ENCODE measurements at regions of chr9 and their contacts with region 1.

Region 1: DNA sequence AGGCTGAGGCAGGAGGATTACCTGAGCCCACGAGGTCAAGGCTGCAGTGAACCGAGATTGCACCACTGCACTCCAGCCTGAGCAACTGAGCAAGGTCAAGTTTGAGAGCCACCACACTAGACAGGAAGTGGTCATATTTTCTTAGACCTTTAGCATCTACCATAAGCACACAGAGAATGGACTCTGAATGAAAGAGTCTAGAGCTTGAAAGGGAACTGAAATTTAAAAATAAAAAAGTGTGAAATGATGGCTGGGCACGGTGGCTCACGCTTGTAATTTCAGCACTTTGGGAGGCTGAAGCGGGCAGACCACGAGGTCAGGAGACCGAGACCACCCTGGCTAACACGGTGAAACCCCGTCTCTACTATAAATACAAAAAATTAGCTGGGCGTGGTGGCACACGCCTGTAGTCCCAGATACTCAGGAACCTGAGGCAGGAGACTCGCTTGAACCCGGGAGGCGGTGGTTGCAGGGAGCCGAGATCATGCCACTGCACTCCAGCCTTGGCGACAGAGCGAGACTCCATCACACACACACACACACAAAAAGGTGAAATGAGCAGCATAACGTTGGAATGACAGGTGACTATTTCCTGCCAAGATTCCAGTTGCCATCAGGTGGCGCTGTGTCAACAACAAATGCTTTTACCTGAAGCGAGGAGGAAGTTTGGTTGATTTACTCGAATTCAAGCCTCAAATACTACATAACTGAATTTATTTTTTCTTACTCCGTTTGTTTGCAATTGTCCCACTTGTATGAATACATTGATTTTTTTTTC is 21.3 kb upstream of the AK3 start:
- DNase-seq: peak; percentile 90
- ATAC-seq: peak; percentile 81
- H3K4me3 Mint-ChIP-seq: peak overlapping the region; percentile 50
- H3K27ac Mint-ChIP-seq: peak overlapping the region; percentile 62
- H3K4me1 Mint-ChIP-seq: peaks cover 20% of the 10 kb centered on the region
- H3K27me3 Mint-ChIP-seq: peaks cover 15% of the 10 kb centered on the region

Region 2: GRCh38 chr9:4718911-4719310 is 43.4 kb before region 1 on chr9:
- CTCF ChIA-PET with region 1: no interaction called
- POLR2A ChIA-PET with region 1: no interaction called
- DNase-seq: no peak
- ATAC-seq: no peak
- H3K4me3 Mint-ChIP-seq: no peak overlapping the region
- H3K27ac Mint-ChIP-seq: no peak overlapping the region
- H3K4me1 Mint-ChIP-seq: no peaks in the 10 kb centered on the region
- H3K27me3 Mint-ChIP-seq: no peaks in the 10 kb centered on the region

Region 3: DNA sequence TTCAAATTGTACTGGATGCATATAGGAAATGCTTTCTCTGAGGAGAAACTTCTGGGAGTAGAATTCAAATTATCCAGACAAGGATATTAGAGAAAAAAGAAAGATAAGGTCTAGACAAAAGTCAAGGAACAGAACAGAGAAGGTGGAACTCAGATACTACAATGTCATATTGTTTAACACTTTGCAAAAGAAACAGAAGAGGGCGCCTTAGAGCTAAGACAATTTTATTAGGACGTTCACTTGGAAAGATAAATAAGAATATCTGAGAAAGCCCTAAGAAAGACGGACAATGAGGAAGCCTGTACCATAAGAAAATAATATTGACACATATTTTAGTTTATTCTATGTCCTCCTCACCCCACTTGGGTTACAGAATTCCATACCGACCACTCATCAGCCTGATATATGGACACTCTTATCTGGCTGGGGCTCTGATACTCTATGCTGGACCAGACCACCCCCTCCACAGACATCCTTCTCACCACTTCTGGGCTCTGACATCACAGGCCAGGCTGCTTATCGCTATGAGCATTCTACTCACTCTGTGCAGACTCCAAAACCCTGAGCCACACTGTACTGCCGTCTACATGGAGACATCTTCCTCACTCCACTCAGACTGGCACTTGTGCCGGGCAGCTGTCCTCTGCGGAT is 12.1 kb before region 1 on chr9:
- CTCF ChIA-PET with region 1: interaction called, 14 read pairs
- POLR2A ChIA-PET with region 1: no interaction called
- DNase-seq: no peak
- ATAC-seq: peak; percentile 68
- H3K4me3 Mint-ChIP-seq: no peak overlapping the region
- H3K27ac Mint-ChIP-seq: no peak overlapping the region
- H3K4me1 Mint-ChIP-seq: peaks cover 2% of the 10 kb centered on the region
- H3K27me3 Mint-ChIP-seq: peaks cover 2% of the 10 kb centered on the region

Region 4: GRCh38 chr9:4923580-4924544 is 161.6 kb after region 1 on chr9:
- CTCF ChIA-PET with region 1: interaction called, 32 read pairs
- POLR2A ChIA-PET with region 1: no interaction called
- DNase-seq: peak; percentile 50
- ATAC-seq: peak; percentile 70
- H3K4me3 Mint-ChIP-seq: no peak overlapping the region
- H3K27ac Mint-ChIP-seq: peak overlapping the region; percentile 47
- H3K4me1 Mint-ChIP-seq: peaks cover 15% of the 10 kb centered on the region
- H3K27me3 Mint-ChIP-seq: no peaks in the 10 kb centered on the region

Region 5: GRCh38 chr9:5186416-5187169 is 424.3 kb after region 1 on chr9:
- CTCF ChIA-PET with region 1: interaction called, 32 read pairs
- POLR2A ChIA-PET with region 1: no interaction called
- DNase-seq: peak; percentile 77
- ATAC-seq: peak; percentile 87
- H3K4me3 Mint-ChIP-seq: no peak overlapping the region
- H3K27ac Mint-ChIP-seq: no peak overlapping the region
- H3K4me1 Mint-ChIP-seq: peaks cover 12% of the 10 kb centered on the region
- H3K27me3 Mint-ChIP-seq: no peaks in the 10 kb centered on the region